Posterior cingulate gyrus (tissue), 11 donors: ENCODE measurements at regions of chr17 and their contacts with region 1.

Region 1: DNA sequence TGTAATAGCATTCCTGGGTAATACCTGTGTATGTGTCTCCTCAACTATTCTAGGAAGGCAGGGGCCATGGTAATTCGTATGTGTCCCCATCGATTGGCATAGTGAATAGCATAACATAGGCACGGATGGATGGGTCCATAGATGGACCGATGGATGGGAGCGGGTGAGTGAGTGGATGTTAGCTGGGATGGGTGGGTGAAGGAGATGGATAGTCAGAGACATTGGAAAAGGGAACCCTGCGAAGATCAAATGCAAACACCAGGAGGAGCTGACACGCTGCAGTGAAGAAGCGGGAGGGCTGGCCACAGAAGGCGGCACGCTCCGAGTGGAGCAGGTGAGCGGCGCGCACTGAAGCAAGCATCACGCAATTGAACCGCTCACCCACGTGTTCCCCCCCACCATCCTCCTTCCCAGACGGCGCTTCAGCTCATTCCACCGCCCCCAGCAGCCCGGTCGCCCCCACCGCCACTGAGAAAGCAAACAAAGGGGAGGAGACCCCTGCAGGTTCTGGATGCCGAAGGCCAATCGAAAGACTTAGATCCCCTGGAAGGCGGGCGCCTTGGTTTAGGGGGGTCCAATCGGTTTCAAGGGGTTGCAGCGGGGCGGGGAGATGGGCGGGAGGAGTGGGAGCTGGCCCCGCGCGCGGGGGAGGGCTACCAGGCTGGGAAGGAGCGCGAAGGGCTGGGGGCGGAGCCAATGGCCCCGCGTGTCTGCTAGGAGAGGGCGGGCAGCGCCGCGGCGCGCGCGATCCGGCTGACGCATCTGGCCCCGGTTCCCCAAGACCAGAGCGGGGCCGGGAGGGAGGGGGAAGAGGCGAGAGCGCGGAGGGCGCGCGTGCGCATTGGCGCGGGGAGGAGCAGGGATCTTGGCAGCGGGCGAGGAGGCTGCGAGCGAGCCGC is at the start of gene ARRB2:
- DNase-seq: peak; percentile 95 to 100 (median 99)

Region 2: GRCh38 chr17:4903051-4903818 is 193.2 kb after region 1 on chr17 and contains the start of gene CHRNE:
- intact Hi-C with region 1: loop called (anchors 5 kb)
- DNase-seq: peak in 8 of 10 donors; percentile 36 to 87 (median 78)